Activated CD4-positive, alpha-beta T cell treated with anti-CD3 and anti-CD28 coated beads for 36 hours (primary cell): ENCODE measurements at regions of chr6 and their contacts with region 1.

Region 1: DNA sequence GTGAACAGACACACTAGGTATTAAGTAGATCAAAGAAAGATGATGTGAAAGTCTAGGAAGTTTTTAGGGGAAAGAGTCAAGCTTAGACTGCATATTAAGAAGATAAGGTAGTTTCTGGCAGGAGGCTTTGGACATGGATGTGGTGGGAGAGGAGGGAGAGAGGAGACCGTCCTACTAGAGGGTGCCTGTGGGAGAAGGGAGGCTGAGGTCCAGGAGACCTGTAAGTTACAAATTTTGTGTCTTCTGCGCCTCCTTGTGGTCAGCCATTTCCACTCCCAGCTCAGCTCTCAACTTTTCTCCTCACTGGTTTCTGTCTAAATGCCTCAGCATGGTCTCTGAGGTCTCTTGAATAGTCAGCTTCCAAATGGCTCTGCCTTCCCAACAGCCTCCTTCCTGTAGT is 193.5 kb downstream of the UNC5CL start:
- DNase-seq: peak; percentile 55
- ATAC-seq: no peak
- H3K4me3 Mint-ChIP-seq: no peak overlapping the region
- H3K27ac Mint-ChIP-seq: no peak overlapping the region
- H3K4me1 Mint-ChIP-seq: no peaks in the 10 kb centered on the region
- H3K27me3 Mint-ChIP-seq: peaks cover 21% of the 10 kb centered on the region

Region 2: GRCh38 chr6:39980839-39981580 is 864.5 kb before region 1 on chr6:
- CTCF ChIA-PET with region 1: no interaction called
- POLR2A ChIA-PET with region 1: no interaction called
- intact Hi-C with region 1: loop called in 1 of 2 experiments (anchors 10 kb)
- DNase-seq: peak; percentile 16
- ATAC-seq: no peak
- H3K4me3 Mint-ChIP-seq: no peak overlapping the region
- H3K27ac Mint-ChIP-seq: no peak overlapping the region
- H3K4me1 Mint-ChIP-seq: no peaks in the 10 kb centered on the region
- H3K27me3 Mint-ChIP-seq: peaks cover 3% of the 10 kb centered on the region

Region 3: DNA sequence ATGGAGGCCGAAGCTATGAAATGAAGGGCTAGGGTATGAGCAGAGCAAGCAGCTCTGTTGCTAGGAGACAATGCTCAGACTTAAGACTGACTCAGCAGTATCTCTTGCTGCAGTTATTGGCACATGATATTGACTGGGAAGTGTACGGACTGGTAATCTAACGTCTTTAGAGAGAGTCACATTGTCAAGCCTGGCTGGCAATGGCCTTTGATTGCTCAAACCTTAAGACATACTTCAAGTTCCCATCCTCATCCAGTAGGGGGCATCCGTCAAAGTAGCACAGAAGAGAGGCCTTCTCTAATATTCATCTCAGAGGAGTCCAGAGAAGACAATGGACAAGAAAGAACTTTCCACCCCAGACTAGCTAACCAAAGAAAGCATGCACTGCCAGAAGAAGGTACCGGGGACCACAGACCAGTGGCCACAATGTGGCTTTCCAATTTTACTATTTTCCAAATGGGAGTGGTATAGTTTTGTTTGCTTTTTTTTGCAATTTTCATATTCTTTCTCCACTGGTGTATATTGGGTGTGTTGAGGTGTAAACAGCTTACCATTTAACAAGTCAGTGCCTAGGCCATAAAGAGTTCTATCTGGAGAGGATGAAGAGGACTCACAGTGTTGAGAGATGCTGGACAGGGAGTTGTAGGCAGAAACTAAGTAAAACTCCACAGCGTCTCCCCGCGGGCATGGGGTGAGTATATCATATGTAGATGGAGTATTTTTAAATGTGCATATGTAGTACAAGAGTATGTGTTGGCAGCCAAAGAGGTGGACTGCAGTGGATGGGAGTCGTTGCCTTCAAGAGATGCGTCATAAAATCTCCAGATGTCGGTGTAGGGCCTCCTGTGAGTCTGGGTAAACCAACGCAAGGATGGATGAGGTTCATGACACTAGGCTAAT is 295.1 kb before region 1 on chr6:
- CTCF ChIA-PET with region 1: interaction called, 3 read pairs
- POLR2A ChIA-PET with region 1: no interaction called
- intact Hi-C with region 1: loop called in 1 of 2 experiments (anchors 1 kb)
- DNase-seq: peak; percentile 40
- ATAC-seq: peak; percentile 51
- H3K4me3 Mint-ChIP-seq: no peak overlapping the region
- H3K27ac Mint-ChIP-seq: no peak overlapping the region
- H3K4me1 Mint-ChIP-seq: no peaks in the 10 kb centered on the region
- H3K27me3 Mint-ChIP-seq: no peaks in the 10 kb centered on the region